CD4-positive, alpha-beta memory T cell (primary cell): ENCODE measurements at regions of chr13 and their contacts with region 1.

Region 1: GRCh38 chr13:40982772-40983171 is 36.3 kb downstream of the ELF1 start:
- DNase-seq: peak; percentile 78 to 90 (median 84)
- H3K4me3 ChIP-seq: peak overlapping the region; percentile 76 to 90
- H3K4me3 Mint-ChIP-seq: peak overlapping the region; percentile 82 to 98 (median 92)
- H3K27ac ChIP-seq: peak overlapping the region; percentile 82
- H3K27ac Mint-ChIP-seq: peak overlapping the region; percentile 95 to 99 (median 97)
- H3K4me1 ChIP-seq: peaks cover 49% of the 10 kb centered on the region
- H3K4me1 Mint-ChIP-seq: peaks cover 38 to 57% (median 45%) of the 10 kb centered on the region in 4 donors
- H3K27me3 ChIP-seq: no peaks in the 10 kb centered on the region
- H3K27me3 Mint-ChIP-seq: no peaks in the 10 kb centered on the region

Region 2: GRCh38 chr13:40922437-40923040 is 60.2 kb before region 1 on chr13:
- CTCF ChIA-PET with region 1: interaction called, 5 read pairs
- POLR2A ChIA-PET with region 1: interaction called, 7 read pairs
- intact Hi-C with region 1: loop called (anchors 2 kb)
- DNase-seq: no peak
- H3K4me3 ChIP-seq: no peak overlapping the region
- H3K4me3 Mint-ChIP-seq: peak overlapping the region; percentile 63 to 83 (median 73)
- H3K27ac ChIP-seq: no peak overlapping the region
- H3K27ac Mint-ChIP-seq: peak overlapping the region in 6 of 7 donors; percentile 70 to 90 (median 80)
- H3K4me1 ChIP-seq: peaks cover 15% of the 10 kb centered on the region
- H3K4me1 Mint-ChIP-seq: peaks cover 12 to 29% (median 21%) of the 10 kb centered on the region in 4 donors
- H3K27me3 ChIP-seq: no peaks in the 10 kb centered on the region
- H3K27me3 Mint-ChIP-seq: no peaks in the 10 kb centered on the region

Region 3: GRCh38 chr13:40992678-40993518 is 10.1 kb after region 1 on chr13:
- CTCF ChIA-PET with region 1: interaction called, 8 read pairs
- POLR2A ChIA-PET with region 1: interaction called, 16 read pairs
- intact Hi-C with region 1: loop called (anchors 1 kb)
- DNase-seq: no peak
- H3K4me3 ChIP-seq: no peak overlapping the region
- H3K4me3 Mint-ChIP-seq: peak overlapping the region in 6 of 8 donors; percentile 9 to 65 (median 35)
- H3K27ac ChIP-seq: peak overlapping the region; percentile 41
- H3K27ac Mint-ChIP-seq: peak overlapping the region; percentile 65 to 94 (median 85)
- H3K4me1 ChIP-seq: peaks cover 93% of the 10 kb centered on the region
- H3K4me1 Mint-ChIP-seq: peaks cover 54 to 87% (median 69%) of the 10 kb centered on the region in 4 donors
- H3K27me3 ChIP-seq: no peaks in the 10 kb centered on the region
- H3K27me3 Mint-ChIP-seq: no peaks in the 10 kb centered on the region

Region 4: DNA sequence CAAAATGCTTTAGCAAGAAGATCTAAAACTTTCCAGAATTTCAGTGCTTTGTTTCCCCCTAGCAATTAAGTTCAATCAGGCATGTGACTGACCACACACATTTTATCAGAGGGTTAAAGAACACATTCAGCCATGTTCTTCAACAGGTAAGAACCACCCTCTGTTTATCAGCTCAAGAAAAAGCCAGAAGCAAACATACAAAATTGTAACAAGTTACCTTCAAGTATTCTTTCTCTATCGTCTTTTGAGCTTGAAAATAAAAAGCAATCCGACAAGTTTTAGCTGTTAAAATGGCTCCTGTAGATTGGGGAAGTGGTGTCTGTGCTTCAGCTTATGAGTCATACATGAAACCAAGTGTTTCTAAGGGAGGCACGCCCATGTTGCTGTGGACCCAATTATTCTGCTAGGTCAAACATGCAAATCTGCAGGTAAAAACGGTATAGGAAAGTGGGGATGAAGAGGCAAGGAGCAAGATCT is 36.3 kb after region 1 on chr13 and contains the start of gene ELF1:
- CTCF ChIA-PET with region 1: interaction called, 5 read pairs
- POLR2A ChIA-PET with region 1: interaction called, 226 read pairs
- intact Hi-C with region 1: loop called (anchors 1 kb)
- DNase-seq: peak; percentile 74 to 89 (median 80)
- H3K4me3 ChIP-seq: peak within 1 kb of the TSS; percentile 65 to 72
- H3K4me3 Mint-ChIP-seq: peak within 1 kb of the TSS; percentile 83 to 98 (median 95)
- H3K27ac ChIP-seq: peak within 1 kb of the TSS; percentile 85
- H3K27ac Mint-ChIP-seq: peak within 1 kb of the TSS; percentile 90 to 99 (median 96)
- H3K4me1 ChIP-seq: peaks cover 34% of the 10 kb centered on the region
- H3K4me1 Mint-ChIP-seq: peaks cover 26 to 39% (median 33%) of the 10 kb centered on the region in 4 donors
- H3K27me3 ChIP-seq: no peaks in the 10 kb centered on the region
- H3K27me3 Mint-ChIP-seq: no peaks in the 10 kb centered on the region
- total RNA-seq, gene ELF1: 188 to 192 TPM